IMR-90 (cell line): ENCODE measurements at regions of chr19 and their contacts with region 1.

Region 1: DNA sequence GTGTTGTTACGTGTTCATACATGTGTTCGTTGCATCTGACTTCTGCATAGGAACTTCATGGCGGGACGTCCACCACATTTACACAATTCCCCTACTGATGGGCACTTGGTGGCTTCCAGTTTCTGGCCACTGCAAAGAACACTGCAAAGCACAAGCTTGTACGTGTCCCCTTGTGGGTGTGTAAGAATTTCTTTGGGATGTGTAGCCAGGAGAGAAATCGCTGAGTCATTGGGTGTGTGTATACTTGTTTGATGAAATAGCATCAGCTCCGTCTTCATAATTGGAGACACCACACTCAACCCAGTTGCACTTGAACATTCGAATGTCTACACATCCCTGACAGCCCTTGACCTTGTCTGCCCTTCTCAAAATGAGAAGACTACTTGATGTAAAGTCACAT is 19.2 kb downstream of the KLK5 start:
- DNase-seq: peak; percentile 24
- ATAC-seq: no peak
- H3K4me3 ChIP-seq: no peak overlapping the region
- H3K27ac ChIP-seq: no peak overlapping the region
- H3K4me1 ChIP-seq: no peaks in the 10 kb centered on the region
- H3K27me3 ChIP-seq: no peaks in the 10 kb centered on the region
- CTCF ChIP-seq: no peak
- POLR2A ChIP-seq: no peak
- RAD21 ChIP-seq: no peak

Region 2: DNA sequence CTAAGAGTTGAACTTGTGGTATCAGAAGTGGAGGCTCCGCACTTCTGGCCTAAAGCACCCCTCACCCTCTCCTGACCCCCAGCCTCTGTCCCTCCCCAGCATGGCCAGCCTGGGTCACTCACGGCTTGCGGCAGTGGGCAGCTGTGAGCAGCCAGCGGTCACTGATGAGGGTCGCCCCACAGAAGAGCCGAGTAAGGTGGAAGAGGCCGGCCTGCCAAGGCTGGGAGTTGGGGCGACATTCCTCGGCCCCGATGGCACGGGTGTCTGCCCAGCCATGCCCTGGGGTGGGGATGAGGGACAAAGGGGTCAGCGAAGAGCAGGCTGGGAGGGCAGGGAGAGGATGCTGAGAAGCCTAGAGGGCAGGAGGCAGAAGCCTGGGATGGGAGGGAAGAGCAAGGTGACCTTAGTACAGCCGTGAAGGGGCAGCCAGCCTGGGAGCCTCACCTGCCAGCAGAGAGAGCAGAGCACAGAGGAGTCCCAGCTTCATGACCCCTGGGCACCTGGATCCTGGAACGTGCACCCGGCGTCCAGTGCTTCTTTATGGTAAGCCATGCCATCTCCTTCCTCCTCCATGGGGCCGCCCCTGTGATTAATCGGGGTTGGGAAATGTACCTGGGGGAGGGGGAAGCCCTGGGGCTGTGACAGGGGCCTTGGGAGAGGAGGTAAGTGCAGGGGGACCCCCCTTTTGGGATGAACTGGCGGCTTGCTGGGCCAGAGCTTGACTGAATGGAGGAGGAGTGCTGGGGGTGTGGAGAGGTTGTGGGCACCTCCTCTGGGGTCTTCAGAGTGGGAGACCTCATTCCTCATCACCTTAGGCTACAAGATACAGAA is 75.6 kb after region 1 on chr19:
- CTCF ChIA-PET with region 1: no interaction called
- POLR2A ChIA-PET with region 1: no interaction called
- dilution Hi-C with region 1: no loop called
- in situ Hi-C with region 1: no loop called
- intact Hi-C with region 1: no loop called
- DNase-seq: no peak
- ATAC-seq: no peak
- H3K4me3 ChIP-seq: no peak overlapping the region
- H3K27ac ChIP-seq: no peak overlapping the region
- H3K4me1 ChIP-seq: no peaks in the 10 kb centered on the region
- H3K27me3 ChIP-seq: no peaks in the 10 kb centered on the region
- CTCF ChIP-seq: no peak
- POLR2A ChIP-seq: no peak
- RAD21 ChIP-seq: no peak

Region 3: DNA sequence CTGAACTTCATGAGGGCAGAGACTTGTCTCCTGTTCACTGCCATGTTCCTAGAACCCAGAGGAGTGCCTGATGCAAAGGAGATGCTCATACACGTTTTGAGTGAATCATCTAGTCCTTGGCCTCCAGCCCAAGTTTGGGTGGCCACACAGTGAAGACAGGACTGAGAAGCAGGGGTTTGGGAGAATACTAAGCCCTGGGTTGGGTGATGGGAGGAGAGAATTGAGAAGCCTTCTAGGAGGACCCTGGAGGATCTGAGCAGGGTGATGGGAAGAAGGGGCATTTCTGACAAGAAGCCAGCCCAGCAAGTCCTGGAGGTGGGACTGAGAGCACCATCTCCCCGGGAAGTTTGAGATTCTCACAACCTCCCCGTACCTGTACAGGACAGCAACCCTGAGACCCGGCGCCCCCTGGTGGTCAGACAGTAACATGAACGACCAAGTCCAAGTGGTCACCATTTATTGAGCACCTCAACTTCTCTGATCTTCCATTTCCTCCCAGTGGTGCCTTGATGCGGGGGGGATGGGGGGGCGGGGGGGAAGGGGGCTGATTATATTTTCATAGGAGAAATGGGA is 163.6 kb after region 1 on chr19:
- CTCF ChIA-PET with region 1: interaction called, 7 read pairs
- POLR2A ChIA-PET with region 1: no interaction called
- dilution Hi-C with region 1: no loop called
- in situ Hi-C with region 1: no loop called
- intact Hi-C with region 1: loop called (anchors 5 kb)
- DNase-seq: peak; percentile 62
- ATAC-seq: peak; percentile 54
- H3K4me3 ChIP-seq: no peak overlapping the region
- H3K27ac ChIP-seq: no peak overlapping the region
- H3K4me1 ChIP-seq: peaks cover 3% of the 10 kb centered on the region; the same call in 1 of the 2 replicates
- H3K27me3 ChIP-seq: no peaks in the 10 kb centered on the region
- CTCF ChIP-seq: peak; percentile 55
- POLR2A ChIP-seq: no peak
- RAD21 ChIP-seq: peak; percentile 41

Region 4: GRCh38 chr19:51168564-51169282 is 235.1 kb after region 1 on chr19:
- CTCF ChIA-PET with region 1: no interaction called
- POLR2A ChIA-PET with region 1: no interaction called
- dilution Hi-C with region 1: no loop called
- in situ Hi-C with region 1: no loop called
- intact Hi-C with region 1: loop called (anchors 1 kb)
- DNase-seq: no peak
- ATAC-seq: no peak
- H3K4me3 ChIP-seq: no peak overlapping the region
- H3K27ac ChIP-seq: no peak overlapping the region
- H3K4me1 ChIP-seq: no peaks in the 10 kb centered on the region
- H3K27me3 ChIP-seq: no peaks in the 10 kb centered on the region
- CTCF ChIP-seq: no peak
- POLR2A ChIP-seq: no peak
- RAD21 ChIP-seq: no peak